PC-9 (cell line): ENCODE measurements at regions of chr22 and their contacts with region 1.

Region 1: DNA sequence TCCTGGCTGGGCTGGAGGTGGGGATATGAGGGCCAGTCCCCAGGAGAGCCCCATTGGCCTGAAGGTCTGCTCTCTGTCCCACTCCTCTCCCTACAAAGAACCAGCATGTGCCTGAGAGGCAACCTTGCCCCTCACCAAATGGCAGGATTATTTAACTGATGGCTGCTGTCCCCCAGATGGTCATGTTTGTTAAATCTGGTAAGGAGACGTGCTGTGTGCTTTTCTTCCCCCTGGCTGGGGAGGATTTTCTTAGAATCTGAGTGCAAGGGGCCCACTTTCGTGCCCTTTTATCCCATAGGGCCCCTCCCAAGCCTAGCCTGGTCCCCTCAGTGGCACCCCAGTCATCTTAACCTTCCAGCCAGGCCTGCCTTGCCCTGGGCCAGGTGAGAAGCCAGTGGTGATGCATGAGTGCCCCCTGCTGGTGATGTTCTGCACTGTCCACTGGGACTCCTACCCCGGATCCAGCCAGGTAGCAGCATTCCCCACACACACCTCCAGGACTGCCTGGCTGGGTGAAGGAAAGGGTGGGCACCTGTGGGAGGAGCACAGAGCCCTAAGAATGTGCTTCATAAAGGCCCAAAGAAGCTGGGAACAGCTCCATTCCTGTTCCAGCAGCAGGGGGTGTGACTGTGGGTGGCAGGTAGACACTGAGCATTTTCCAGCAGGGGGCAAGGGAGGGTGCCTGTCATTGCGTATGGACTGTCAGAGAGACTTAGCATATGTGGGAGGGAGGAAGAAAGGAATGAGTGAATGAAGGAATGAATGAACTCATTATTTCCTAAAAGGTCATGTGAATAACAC is 28.9 kb downstream of the MFNG start:
- DNase-seq: peak; percentile 61 to 92
- H3K4me3 ChIP-seq: no peak overlapping the region
- H3K27ac ChIP-seq: no peak overlapping the region
- H3K4me1 ChIP-seq: peaks cover 27% of the 10 kb centered on the region
- H3K27me3 ChIP-seq: no peaks in the 10 kb centered on the region
- CTCF ChIP-seq: peak; percentile 100

Region 2: GRCh38 chr22:36781656-36782627 is 675.4 kb before region 1 on chr22:
- CTCF ChIA-PET with region 1: no interaction called
- POLR2A ChIA-PET with region 1: no interaction called
- intact Hi-C with region 1: loop called (anchors 5 kb)
- DNase-seq: peak; percentile 80 to 93
- H3K4me3 ChIP-seq: no peak overlapping the region
- H3K27ac ChIP-seq: no peak overlapping the region
- H3K4me1 ChIP-seq: peaks cover 5% of the 10 kb centered on the region
- H3K27me3 ChIP-seq: peaks cover 9% of the 10 kb centered on the region
- CTCF ChIP-seq: peak; percentile 99

Region 3: GRCh38 chr22:37166675-37167066 is 290.6 kb before region 1 on chr22:
- CTCF ChIA-PET with region 1: no interaction called
- POLR2A ChIA-PET with region 1: no interaction called
- intact Hi-C with region 1: loop called (anchors 1 kb)
- DNase-seq: peak; percentile 73 to 86
- H3K4me3 ChIP-seq: peak overlapping the region; percentile 12; the same call in 1 of the 2 replicates
- H3K27ac ChIP-seq: no peak overlapping the region
- H3K4me1 ChIP-seq: peaks cover 9% of the 10 kb centered on the region; the same call in 1 of the 2 replicates
- H3K27me3 ChIP-seq: no peaks in the 10 kb centered on the region
- CTCF ChIP-seq: peak; percentile 96

Region 4: GRCh38 chr22:37316875-37317371 is 140.4 kb before region 1 on chr22:
- CTCF ChIA-PET with region 1: interaction called, 33 read pairs
- POLR2A ChIA-PET with region 1: interaction called, 5 read pairs
- intact Hi-C with region 1: loop called (anchors 1 kb)
- DNase-seq: peak; percentile 90
- H3K4me3 ChIP-seq: no peak overlapping the region
- H3K27ac ChIP-seq: no peak overlapping the region
- H3K4me1 ChIP-seq: peaks cover 51% of the 10 kb centered on the region
- H3K27me3 ChIP-seq: no peaks in the 10 kb centered on the region
- CTCF ChIP-seq: peak; percentile 99

Region 5: DNA sequence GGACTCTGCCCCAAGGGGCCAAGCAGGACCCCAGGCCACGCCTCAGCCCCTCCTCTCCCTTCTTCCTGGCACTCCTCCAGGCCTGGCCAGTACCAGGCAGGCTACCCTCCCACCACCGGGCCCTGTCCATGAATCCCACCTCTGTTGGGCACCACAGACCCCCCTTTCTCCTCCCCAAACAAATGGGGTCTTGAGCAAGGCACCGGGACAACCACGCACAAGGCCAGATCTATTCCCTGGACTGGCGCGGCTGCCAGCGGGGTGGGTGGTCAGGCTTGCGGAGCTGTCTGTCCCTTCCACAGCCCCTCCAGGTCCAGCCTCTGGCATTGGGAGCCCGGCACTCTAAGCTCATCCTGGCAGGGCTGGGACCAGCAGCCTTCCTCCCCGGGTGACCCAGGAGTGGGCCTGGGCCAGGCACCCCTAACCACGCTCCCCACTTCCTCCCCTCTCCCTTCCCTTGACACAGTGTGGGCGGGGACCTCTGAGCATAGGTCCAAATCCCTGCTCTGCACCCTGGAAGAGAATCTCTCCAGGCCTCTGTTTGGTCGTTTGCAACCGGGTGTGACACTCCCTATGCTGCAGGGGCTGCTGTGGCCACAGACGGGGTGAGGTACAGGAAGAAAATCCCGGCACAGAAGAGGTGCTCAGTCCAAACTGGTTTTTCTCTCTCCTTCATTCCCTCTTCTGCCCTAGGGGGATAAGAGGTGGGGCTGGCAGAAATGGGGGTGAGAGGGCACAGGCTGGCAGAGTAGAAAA is 44.6 kb before region 1 on chr22:
- CTCF ChIA-PET with region 1: no interaction called
- POLR2A ChIA-PET with region 1: no interaction called
- intact Hi-C with region 1: loop called (anchors 2 kb)
- DNase-seq: peak; percentile 62 to 90
- H3K4me3 ChIP-seq: peak overlapping the region; percentile 22; the same call in 1 of the 2 replicates
- H3K27ac ChIP-seq: peak overlapping the region; percentile 72
- H3K4me1 ChIP-seq: peaks cover 28% of the 10 kb centered on the region
- H3K27me3 ChIP-seq: no peaks in the 10 kb centered on the region
- CTCF ChIP-seq: 0 out of 2 replicates have a peak, but pooled peaks have one; percentile 8

Region 6: GRCh38 chr22:37566903-37567820 is 109.9 kb after region 1 on chr22:
- CTCF ChIA-PET with region 1: interaction called, 3 read pairs
- POLR2A ChIA-PET with region 1: no interaction called
- intact Hi-C with region 1: loop called (anchors 5 kb)
- DNase-seq: peak; percentile 93 to 98
- H3K4me3 ChIP-seq: no peak overlapping the region
- H3K27ac ChIP-seq: peak overlapping the region; percentile 81
- H3K4me1 ChIP-seq: peaks cover 91% of the 10 kb centered on the region
- H3K27me3 ChIP-seq: no peaks in the 10 kb centered on the region
- CTCF ChIP-seq: peak; percentile 99